Activated CD4-positive, alpha-beta memory T cell treated with anti-CD3 and anti-CD28 coated beads for 36 hours (primary cell): ENCODE measurements at regions of chr1 and their contacts with region 1.

Region 1: GRCh38 chr1:65687428-65688214 is 105.1 kb upstream of the PDE4B start:
- DNase-seq: peak; percentile 85
- H3K4me3 Mint-ChIP-seq: no peak overlapping the region
- H3K27ac Mint-ChIP-seq: no peak overlapping the region
- H3K4me1 Mint-ChIP-seq: no peaks in the 10 kb centered on the region
- H3K27me3 Mint-ChIP-seq: peaks cover 10% of the 10 kb centered on the region

Region 2: GRCh38 chr1:64823691-64824476 is 863.7 kb before region 1 on chr1:
- CTCF ChIA-PET with region 1: interaction called, 3 read pairs
- POLR2A ChIA-PET with region 1: no interaction called
- intact Hi-C with region 1: loop called (anchors 10 kb)
- DNase-seq: peak; percentile 64
- H3K4me3 Mint-ChIP-seq: no peak overlapping the region
- H3K27ac Mint-ChIP-seq: no peak overlapping the region
- H3K4me1 Mint-ChIP-seq: peaks cover 29% of the 10 kb centered on the region
- H3K27me3 Mint-ChIP-seq: no peaks in the 10 kb centered on the region

Region 3: GRCh38 chr1:65075123-65075976 is 612.3 kb before region 1 on chr1:
- CTCF ChIA-PET with region 1: interaction called, 15 read pairs
- POLR2A ChIA-PET with region 1: no interaction called
- intact Hi-C with region 1: no loop called
- DNase-seq: peak; percentile 73
- H3K4me3 Mint-ChIP-seq: no peak overlapping the region
- H3K27ac Mint-ChIP-seq: no peak overlapping the region
- H3K4me1 Mint-ChIP-seq: peaks cover 14% of the 10 kb centered on the region
- H3K27me3 Mint-ChIP-seq: no peaks in the 10 kb centered on the region

Region 4: DNA sequence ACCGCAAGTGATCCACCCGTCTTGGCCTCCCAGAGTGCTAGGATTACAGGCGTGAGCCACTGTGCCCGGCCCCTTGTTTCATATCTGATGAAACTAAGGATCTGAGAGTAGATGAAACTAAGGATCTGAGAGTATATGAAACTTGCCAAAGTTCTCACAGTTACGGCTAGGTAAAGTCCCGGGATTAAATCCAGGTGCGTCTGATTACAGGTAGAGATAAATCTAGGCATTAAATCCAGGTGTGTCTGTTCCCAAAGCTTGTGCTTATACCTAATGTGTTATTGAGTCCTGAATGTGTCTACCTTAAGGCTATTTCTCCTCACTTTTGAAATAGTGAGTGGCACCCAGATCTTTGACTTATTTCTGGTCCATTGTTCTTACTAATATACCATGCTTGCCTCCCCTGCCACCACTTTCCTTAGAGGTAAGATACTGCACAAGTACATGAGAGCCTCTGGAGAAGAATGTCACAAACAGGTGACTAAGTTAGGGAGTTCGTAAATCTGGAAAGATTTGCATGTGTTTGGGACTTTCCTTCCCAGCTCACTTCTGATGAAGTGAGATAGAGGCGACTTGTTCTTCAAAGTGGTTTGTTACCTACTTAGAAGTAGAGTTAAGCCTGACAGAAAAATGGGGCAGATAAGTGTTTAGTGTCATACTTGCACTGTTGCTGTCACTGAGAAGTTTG is 473.1 kb before region 1 on chr1:
- CTCF ChIA-PET with region 1: interaction called, 17 read pairs
- POLR2A ChIA-PET with region 1: no interaction called
- intact Hi-C with region 1: no loop called
- DNase-seq: no peak
- H3K4me3 Mint-ChIP-seq: no peak overlapping the region
- H3K27ac Mint-ChIP-seq: peak overlapping the region; percentile 21
- H3K4me1 Mint-ChIP-seq: peaks cover 28% of the 10 kb centered on the region
- H3K27me3 Mint-ChIP-seq: no peaks in the 10 kb centered on the region

Region 5: GRCh38 chr1:65431111-65431705 is 256.4 kb before region 1 on chr1:
- CTCF ChIA-PET with region 1: interaction called, 9 read pairs
- POLR2A ChIA-PET with region 1: no interaction called
- intact Hi-C with region 1: loop called (anchors 2 kb)
- DNase-seq: no peak
- H3K4me3 Mint-ChIP-seq: no peak overlapping the region
- H3K27ac Mint-ChIP-seq: no peak overlapping the region
- H3K4me1 Mint-ChIP-seq: peaks cover 5% of the 10 kb centered on the region
- H3K27me3 Mint-ChIP-seq: no peaks in the 10 kb centered on the region

Region 6: DNA sequence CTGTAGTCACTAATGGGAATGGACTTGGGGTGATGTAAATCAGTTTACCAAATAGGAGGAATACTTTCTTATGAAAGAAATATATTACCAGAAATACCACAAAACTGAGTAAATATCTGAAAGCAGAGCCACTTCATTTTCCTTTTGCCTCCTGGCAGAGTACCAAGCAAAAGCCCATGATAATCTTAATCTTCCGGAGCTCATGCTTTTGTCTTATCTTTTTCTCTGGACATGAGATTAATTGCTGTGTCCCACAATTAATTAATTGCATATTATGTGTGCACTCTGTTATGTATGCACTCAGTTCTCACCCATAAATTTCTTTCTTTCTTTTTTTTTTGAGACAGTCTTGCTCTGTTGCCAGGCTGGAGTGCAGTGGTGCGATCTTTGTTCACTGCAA is 11.0 kb after region 1 on chr1:
- CTCF ChIA-PET with region 1: interaction called, 15 read pairs
- POLR2A ChIA-PET with region 1: no interaction called
- intact Hi-C with region 1: no loop called
- DNase-seq: no peak
- H3K4me3 Mint-ChIP-seq: no peak overlapping the region
- H3K27ac Mint-ChIP-seq: no peak overlapping the region
- H3K4me1 Mint-ChIP-seq: no peaks in the 10 kb centered on the region
- H3K27me3 Mint-ChIP-seq: peaks cover 4% of the 10 kb centered on the region

Region 7: DNA sequence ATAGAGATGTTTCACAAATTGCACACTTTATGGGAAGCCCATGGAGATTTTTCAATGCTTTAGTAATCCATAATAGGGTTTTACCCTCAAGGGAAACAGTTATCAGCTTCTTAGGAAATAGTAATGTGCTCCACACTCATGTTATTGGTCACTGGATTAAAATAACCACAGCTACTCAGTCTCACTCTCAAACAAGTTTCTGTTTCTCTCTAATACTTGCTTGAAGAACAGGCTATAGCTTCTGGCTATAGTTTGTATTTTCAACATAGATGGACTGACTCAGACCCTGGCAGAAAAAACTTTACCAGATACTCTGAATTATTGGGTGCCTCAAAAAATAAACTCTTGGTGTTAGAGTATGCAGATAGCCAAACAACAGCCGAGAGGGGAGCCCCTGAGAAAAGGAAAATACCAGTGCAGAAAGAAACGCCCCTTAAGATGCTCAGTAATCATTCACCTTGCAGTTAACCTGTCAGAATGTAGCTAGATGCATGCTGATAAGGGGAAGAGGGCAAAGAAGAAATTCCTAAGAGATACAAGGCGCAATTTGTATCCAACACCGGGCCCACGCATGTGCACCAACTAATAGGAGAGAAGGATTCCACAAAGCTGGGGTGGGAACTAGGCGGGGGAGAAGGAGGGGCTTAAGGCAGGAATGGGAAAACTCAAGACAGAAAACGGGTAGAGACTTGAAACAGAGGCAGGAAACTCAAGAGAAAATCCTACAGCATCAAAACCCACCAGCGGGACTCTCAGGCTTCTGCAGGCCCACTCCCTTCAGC is 74.7 kb after region 1 on chr1:
- CTCF ChIA-PET with region 1: no interaction called
- POLR2A ChIA-PET with region 1: no interaction called
- intact Hi-C with region 1: no loop called
- DNase-seq: no peak
- H3K4me3 Mint-ChIP-seq: no peak overlapping the region
- H3K27ac Mint-ChIP-seq: no peak overlapping the region
- H3K4me1 Mint-ChIP-seq: no peaks in the 10 kb centered on the region
- H3K27me3 Mint-ChIP-seq: peaks cover 3% of the 10 kb centered on the region